ENCODE measurements at regions of chr11 and their contacts with region 1.

Region 1: DNA sequence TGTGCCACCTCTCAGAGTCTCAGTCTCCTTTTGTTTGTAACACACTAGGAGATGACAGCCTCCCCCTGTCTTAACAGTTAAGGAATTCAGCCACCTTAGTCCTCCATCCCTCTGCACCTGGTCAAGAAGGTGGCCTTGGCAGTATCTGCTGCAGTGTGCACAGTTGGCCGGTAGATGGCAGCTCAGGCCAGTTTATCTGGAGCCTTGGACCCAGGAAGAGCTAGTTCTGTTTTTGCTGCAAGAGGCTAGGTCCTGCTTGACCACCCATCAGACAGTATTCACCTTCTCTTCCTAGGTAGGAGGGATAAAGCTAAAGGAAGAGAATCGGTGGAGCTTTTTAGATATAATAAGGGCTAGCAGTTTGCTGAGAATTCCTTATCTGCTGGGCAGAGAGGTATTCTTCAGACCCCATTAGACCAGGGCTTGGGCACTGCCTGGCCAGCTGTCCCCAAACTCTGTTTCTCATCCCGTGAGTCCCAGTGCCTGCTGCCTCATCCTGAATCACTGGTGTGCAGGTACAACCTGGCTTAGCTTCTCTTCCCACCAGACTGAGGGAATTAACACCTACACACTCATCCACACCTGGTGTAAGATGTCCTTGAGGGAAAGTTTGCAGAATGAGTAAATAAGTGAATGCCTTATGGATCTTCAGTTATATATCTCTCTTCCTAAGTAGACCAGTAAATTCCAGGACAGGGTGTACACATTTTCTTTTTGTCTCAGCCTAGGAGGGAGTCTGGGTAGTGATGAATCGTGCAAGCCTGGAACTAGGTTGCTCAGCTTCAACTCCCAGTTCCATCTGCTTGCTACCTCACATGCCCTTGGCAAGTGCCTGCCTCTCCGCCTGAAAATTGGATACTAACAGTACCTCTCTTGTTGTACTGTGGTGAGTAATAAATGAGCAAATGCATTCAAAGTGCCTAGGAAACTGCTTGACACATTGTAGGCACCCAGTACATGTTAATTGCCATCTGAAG is 70.8 kb upstream of the NARS2 start:
- DNase-seq: peak; percentile 75
- H3K4me3 ChIP-seq: no peak overlapping the region
- H3K27ac ChIP-seq: no peak overlapping the region
- H3K4me1 ChIP-seq: no peaks in the 10 kb centered on the region
- H3K27me3 ChIP-seq: no peaks in the 10 kb centered on the region
- CTCF ChIP-seq: peak; percentile 95

Region 2: GRCh38 chr11:78715639-78716311 is 70.3 kb after region 1 on chr11:
- intact Hi-C with region 1: loop called (anchors 2 kb)
- DNase-seq: peak; percentile 66
- H3K4me3 ChIP-seq: no peak overlapping the region
- H3K27ac ChIP-seq: no peak overlapping the region
- H3K4me1 ChIP-seq: no peaks in the 10 kb centered on the region
- H3K27me3 ChIP-seq: no peaks in the 10 kb centered on the region
- CTCF ChIP-seq: peak; percentile 54

Region 3: DNA sequence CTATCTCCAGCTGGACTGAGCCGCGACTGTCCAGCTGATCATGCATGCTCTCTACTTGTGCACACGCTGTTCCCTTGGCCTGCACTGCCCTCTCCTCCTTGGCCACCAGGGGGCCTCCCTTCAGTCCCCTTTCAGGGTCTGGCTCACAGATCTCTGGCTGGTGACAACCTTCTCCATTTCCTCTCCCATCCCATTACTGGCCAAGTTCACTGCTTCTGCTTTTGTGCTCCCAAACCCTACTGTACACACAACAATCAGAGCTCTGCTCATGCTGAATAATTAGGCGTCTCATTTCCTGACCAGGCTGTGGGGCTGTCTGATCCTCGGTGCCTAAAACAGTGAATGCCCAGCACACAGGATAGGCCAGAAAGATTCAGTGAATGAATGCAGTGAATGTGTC is 153.1 kb after region 1 on chr11:
- intact Hi-C with region 1: loop called (anchors 10 kb)
- DNase-seq: peak; percentile 78
- H3K4me3 ChIP-seq: no peak overlapping the region
- H3K27ac ChIP-seq: no peak overlapping the region
- H3K4me1 ChIP-seq: peaks cover 4% of the 10 kb centered on the region
- H3K27me3 ChIP-seq: no peaks in the 10 kb centered on the region
- CTCF ChIP-seq: peak; percentile 90

Region 4: GRCh38 chr11:78961247-78961646 is 315.7 kb after region 1 on chr11:
- intact Hi-C with region 1: loop called (anchors 2 kb)
- DNase-seq: peak; percentile 39
- H3K4me3 ChIP-seq: no peak overlapping the region
- H3K27ac ChIP-seq: no peak overlapping the region
- H3K4me1 ChIP-seq: no peaks in the 10 kb centered on the region
- H3K27me3 ChIP-seq: no peaks in the 10 kb centered on the region
- CTCF ChIP-seq: peak; percentile 44

Region 5: DNA sequence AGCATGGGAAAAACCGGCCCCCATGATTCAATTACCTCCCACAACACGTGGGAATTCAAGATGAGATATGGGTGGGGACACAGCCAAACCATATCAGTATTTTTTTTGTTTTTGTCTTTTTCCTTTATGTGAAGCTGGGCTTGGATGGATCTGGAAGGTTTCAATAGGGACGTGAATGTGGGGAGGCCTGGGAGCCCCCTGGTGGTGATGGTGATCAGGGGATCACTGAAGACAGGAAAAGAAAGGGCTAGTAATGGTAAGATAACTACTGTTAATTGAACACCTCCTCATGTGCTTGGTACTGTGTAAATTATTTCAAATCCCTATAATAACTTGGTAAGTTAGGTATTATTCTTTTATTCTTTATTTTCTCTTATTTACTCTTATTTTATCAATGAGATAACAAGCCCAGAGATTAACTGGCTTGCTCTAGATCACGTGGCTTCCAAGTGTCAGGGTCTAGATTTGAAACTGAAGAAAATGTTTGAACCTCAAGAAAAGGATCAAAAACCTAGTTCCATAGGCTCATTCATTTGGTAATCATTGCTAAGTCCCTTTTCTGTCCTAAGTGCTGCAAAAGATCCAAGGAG is 431.1 kb after region 1 on chr11:
- intact Hi-C with region 1: loop called (anchors 1 kb)
- DNase-seq: peak; percentile 42
- H3K4me3 ChIP-seq: no peak overlapping the region
- H3K27ac ChIP-seq: no peak overlapping the region
- H3K4me1 ChIP-seq: no peaks in the 10 kb centered on the region
- H3K27me3 ChIP-seq: no peaks in the 10 kb centered on the region
- CTCF ChIP-seq: peak; percentile 54

Region 6: GRCh38 chr11:79493555-79494171 is 848.1 kb after region 1 on chr11:
- intact Hi-C with region 1: loop called (anchors 10 kb)
- DNase-seq: peak; percentile 75
- H3K4me3 ChIP-seq: no peak overlapping the region
- H3K27ac ChIP-seq: no peak overlapping the region
- H3K4me1 ChIP-seq: no peaks in the 10 kb centered on the region
- H3K27me3 ChIP-seq: no peaks in the 10 kb centered on the region
- CTCF ChIP-seq: peak; percentile 73